GM12878 (cell line): ENCODE measurements at regions of chr15 and their contacts with region 1.

Region 1: DNA sequence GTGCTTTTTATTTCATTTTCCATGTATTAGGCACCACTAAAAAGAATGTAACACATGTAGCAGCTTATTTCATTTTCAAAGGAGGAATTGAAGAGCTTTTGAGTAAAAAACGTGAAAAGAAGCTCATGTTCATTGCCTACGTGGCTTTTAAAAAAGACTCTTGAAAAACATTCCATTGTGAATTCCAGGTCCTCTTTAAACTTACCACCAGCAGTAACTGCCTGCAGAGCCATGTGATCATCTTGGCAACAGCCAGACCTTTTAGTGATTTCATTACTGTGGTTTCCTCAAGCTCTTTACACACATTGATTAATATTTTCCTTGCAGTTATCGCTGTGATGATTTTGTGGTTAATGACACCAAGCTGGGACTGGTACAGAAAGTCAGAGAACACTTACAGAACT is 43.8 kb upstream of the FBXL22 start:
- DNase-seq: no peak
- ATAC-seq: peak; percentile 47
- H3K4me3 ChIP-seq: no peak overlapping the region
- H3K27ac ChIP-seq: no peak overlapping the region
- H3K4me1 ChIP-seq: peaks cover 5% of the 10 kb centered on the region
- H3K27me3 ChIP-seq: no peaks in the 10 kb centered on the region
- CTCF ChIP-seq: no peak
- EP300 ChIP-seq: no peak
- POLR2A ChIP-seq: no peak
- RAD21 ChIP-seq: no peak

Region 2: DNA sequence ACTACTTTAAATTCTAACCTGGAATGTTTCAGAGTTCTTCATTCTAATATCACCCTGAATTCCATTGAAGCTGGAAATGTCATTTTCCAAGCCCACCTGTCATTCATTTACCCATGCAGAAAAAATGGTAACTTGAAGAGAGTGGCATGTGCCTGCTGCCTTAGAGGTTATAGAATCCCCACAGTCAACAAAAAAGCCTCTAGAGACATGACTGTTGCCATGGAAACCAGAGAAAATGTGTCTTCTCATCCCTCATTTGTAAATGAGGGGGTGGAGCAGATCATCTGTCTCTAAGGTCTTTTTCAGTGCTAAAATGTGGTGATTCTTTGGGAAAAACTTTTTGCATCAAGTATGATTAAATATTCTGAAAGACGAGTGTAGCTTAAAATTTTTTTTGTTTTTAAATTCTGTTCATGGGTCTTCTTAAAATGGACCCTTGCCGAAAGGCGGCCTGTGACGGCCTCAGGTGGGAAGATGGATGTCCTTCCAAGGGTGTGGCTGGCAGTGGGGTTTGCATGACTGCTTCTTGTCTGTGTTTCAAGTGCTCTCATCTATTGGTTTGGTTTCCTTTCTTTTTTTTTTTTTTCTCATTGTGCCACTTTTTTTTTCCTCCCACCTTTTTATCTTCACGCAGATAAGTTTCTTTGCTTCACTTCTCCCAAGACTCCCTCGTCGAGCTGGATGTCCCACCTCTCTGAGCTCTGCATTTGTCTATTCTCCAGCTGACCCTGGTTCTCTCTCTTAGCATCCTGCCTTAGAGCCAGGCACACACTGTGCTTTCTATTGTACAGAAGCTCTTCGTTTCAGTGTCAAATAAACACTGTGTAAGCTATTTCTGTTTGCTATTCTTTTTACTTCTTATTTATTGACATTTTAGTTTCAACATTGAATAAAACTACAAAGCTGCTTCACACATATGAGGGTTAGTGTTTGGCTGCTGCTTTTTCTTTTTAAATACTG is 487.8 kb before region 1 on chr15:
- CTCF ChIA-PET with region 1: no interaction called
- POLR2A ChIA-PET with region 1: no interaction called
- RAD21 ChIA-PET with region 1: no interaction called
- SMC1A ChIA-PET with region 1: no interaction called
- in situ Hi-C with region 1: no loop called
- intact Hi-C with region 1: no loop called
- DNase-seq: no peak
- ATAC-seq: no peak
- H3K4me3 ChIP-seq: no peak overlapping the region
- H3K27ac ChIP-seq: no peak overlapping the region
- H3K4me1 ChIP-seq: no peaks in the 10 kb centered on the region
- H3K27me3 ChIP-seq: no peaks in the 10 kb centered on the region
- CTCF ChIP-seq: no peak
- EP300 ChIP-seq: no peak
- POLR2A ChIP-seq: no peak
- RAD21 ChIP-seq: no peak

Region 3: GRCh38 chr15:63420333-63420747 is 133.1 kb before region 1 on chr15:
- CTCF ChIA-PET with region 1: no interaction called
- POLR2A ChIA-PET with region 1: no interaction called
- RAD21 ChIA-PET with region 1: no interaction called
- SMC1A ChIA-PET with region 1: no interaction called
- in situ Hi-C with region 1: no loop called
- intact Hi-C with region 1: no loop called
- DNase-seq: no peak
- ATAC-seq: peak; percentile 44; the same call in 2 of the 3 replicates
- H3K4me3 ChIP-seq: no peak overlapping the region
- H3K27ac ChIP-seq: no peak overlapping the region
- H3K4me1 ChIP-seq: no peaks in the 10 kb centered on the region
- H3K27me3 ChIP-seq: no peaks in the 10 kb centered on the region
- CTCF ChIP-seq: no peak
- EP300 ChIP-seq: no peak
- POLR2A ChIP-seq: no peak
- RAD21 ChIP-seq: no peak

Region 4: DNA sequence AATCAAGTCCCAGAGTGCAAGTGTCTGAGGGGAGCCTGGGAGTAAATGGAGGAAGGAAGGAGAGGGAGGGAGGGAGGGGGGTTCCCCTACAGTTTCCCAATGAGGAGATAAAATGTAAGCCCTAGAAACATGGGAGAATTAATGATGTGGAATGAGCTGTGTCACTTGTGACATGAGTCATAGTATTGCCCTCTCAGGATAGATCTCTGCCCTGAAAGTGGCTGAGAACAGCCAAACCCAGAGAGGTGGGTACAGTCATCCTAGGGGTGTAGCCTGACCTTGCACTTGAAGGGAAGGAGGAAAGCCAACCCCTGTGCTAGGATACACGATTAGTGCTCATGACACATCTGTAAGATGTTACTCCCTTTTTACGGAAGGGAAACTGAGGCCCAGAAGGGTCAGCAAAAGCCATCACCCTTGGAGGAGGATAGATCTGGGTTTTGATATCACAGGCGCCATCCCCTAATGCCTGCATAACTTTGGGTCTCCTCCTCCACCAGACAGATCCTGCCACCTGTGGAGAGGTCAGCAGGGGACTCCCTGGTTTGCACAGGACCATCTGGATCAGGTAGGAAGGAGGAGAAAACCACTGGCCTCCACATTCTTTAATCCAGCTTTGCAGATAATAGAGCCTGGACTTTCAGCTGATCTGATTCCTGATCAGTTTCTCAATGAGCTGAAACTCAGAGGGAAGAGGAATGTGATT is 72.1 kb before region 1 on chr15:
- CTCF ChIA-PET with region 1: no interaction called
- POLR2A ChIA-PET with region 1: no interaction called
- RAD21 ChIA-PET with region 1: interaction called, 3 read pairs
- SMC1A ChIA-PET with region 1: interaction called, 13 read pairs
- in situ Hi-C with region 1: no loop called
- intact Hi-C with region 1: no loop called
- DNase-seq: peak; percentile 83
- ATAC-seq: peak; percentile 60
- H3K4me3 ChIP-seq: no peak overlapping the region
- H3K27ac ChIP-seq: peak overlapping the region; percentile 77
- H3K4me1 ChIP-seq: peaks cover 88% of the 10 kb centered on the region
- H3K27me3 ChIP-seq: no peaks in the 10 kb centered on the region
- CTCF ChIP-seq: 0 out of 6 replicates have a peak, but pooled peaks of 1 of the 3 experiments have one; percentile 4
- EP300 ChIP-seq: 0 out of 4 replicates have a peak, but pooled peaks of 1 of the 2 experiments have one; percentile 23
- POLR2A ChIP-seq: no peak
- RAD21 ChIP-seq: no peak

Region 5: GRCh38 chr15:63531586-63531985 is 21.8 kb before region 1 on chr15:
- CTCF ChIA-PET with region 1: interaction called, 8 read pairs
- POLR2A ChIA-PET with region 1: interaction called, 5 read pairs
- RAD21 ChIA-PET with region 1: interaction called, 6 read pairs
- SMC1A ChIA-PET with region 1: interaction called, 14 read pairs
- in situ Hi-C with region 1: no loop called
- intact Hi-C with region 1: no loop called
- DNase-seq: no peak
- ATAC-seq: peak; percentile 10; the same call in 1 of the 3 replicates
- H3K4me3 ChIP-seq: no peak overlapping the region
- H3K27ac ChIP-seq: no peak overlapping the region
- H3K4me1 ChIP-seq: peaks cover 51% of the 10 kb centered on the region
- H3K27me3 ChIP-seq: no peaks in the 10 kb centered on the region
- CTCF ChIP-seq: peak in 2 of 3 experiments; percentile 21 to 39; a peak in 2 of 6 replicates
- EP300 ChIP-seq: no peak
- POLR2A ChIP-seq: no peak
- RAD21 ChIP-seq: no peak

Region 6: DNA sequence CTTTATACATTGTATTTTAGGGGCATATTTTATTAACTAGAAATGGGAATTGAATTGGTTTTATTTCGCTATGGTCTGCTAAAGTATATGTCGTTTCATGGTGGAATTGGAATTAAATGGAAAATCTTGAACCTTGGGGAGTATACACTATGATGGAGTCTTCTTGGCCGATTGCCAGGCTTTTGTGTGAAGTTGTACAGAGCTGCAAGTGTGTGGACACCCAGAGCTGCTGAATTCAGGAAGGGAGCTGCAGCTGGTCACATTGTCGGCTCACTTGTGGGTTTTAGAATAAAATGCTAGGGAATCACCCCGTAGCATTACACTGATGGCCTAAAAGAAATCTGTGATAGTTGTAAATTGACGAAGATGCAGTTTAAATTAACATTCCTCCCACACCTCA is 13.9 kb before region 1 on chr15:
- CTCF ChIA-PET with region 1: interaction called, 14 read pairs
- POLR2A ChIA-PET with region 1: interaction called, 6 read pairs
- RAD21 ChIA-PET with region 1: interaction called, 10 read pairs
- SMC1A ChIA-PET with region 1: interaction called, 30 read pairs
- in situ Hi-C with region 1: no loop called
- intact Hi-C with region 1: no loop called
- DNase-seq: no peak
- ATAC-seq: no peak
- H3K4me3 ChIP-seq: no peak overlapping the region
- H3K27ac ChIP-seq: no peak overlapping the region
- H3K4me1 ChIP-seq: peaks cover 35% of the 10 kb centered on the region
- H3K27me3 ChIP-seq: no peaks in the 10 kb centered on the region
- CTCF ChIP-seq: no peak
- EP300 ChIP-seq: no peak
- POLR2A ChIP-seq: no peak
- RAD21 ChIP-seq: no peak